ENCODE measurements at regions of chr1 and their contacts with region 1.

Region 1: DNA sequence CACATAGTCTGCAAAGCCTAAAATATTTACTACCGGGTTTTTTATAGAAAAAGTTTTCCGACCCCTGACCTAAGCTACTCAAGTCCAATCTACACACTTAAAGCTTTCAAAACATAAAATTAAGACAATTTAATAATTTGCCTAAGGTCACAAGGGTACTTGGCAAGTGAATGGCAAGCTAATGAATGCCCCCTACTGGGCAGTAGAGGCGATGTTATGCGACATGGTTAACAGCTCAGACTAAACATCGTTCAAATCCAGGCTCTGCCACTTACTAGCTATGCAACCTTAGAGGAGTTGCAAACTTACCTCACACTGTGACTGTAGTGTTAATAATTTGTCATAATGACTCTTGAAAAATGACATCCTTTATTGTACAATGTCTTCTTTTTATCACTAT is 317.2 kb upstream of the NFIA start:
- H3K4me3 Mint-ChIP-seq: no peak overlapping the region
- H3K27ac Mint-ChIP-seq: no peak overlapping the region
- H3K4me1 Mint-ChIP-seq: no peaks in the 10 kb centered on the region
- H3K27me3 Mint-ChIP-seq: no peaks in the 10 kb centered on the region

Region 2: DNA sequence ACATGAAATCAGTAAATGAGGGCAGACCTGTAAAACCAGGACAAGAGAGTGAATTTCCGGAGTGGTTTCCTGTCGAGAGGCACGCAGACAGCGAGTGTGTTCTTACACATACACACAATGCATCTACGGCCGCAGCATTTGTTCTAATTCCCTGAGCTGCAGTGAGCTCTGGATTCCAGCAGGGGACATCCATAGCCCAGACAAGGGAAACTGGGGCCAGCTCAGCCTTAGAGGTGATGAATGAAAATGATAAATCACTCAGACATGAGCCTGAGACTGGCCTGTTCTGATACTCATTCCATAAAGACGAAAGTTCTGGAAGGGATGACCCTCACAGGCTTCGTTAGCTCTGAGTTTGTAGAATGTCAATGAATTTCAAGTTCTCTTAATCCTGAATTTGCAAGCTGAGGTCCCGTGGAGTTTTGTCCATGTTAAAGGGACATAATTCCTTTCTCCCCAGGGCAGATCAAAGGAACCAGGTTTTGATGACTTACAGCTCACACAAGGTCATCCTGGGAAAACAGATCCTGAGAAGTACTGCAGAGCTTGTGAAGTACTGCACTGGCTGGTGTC is 483.8 kb before region 1 on chr1:
- intact Hi-C with region 1: loop called (anchors 5 kb)
- H3K4me3 Mint-ChIP-seq: no peak overlapping the region
- H3K27ac Mint-ChIP-seq: no peak overlapping the region
- H3K4me1 Mint-ChIP-seq: no peaks in the 10 kb centered on the region
- H3K27me3 Mint-ChIP-seq: no peaks in the 10 kb centered on the region

Region 3: DNA sequence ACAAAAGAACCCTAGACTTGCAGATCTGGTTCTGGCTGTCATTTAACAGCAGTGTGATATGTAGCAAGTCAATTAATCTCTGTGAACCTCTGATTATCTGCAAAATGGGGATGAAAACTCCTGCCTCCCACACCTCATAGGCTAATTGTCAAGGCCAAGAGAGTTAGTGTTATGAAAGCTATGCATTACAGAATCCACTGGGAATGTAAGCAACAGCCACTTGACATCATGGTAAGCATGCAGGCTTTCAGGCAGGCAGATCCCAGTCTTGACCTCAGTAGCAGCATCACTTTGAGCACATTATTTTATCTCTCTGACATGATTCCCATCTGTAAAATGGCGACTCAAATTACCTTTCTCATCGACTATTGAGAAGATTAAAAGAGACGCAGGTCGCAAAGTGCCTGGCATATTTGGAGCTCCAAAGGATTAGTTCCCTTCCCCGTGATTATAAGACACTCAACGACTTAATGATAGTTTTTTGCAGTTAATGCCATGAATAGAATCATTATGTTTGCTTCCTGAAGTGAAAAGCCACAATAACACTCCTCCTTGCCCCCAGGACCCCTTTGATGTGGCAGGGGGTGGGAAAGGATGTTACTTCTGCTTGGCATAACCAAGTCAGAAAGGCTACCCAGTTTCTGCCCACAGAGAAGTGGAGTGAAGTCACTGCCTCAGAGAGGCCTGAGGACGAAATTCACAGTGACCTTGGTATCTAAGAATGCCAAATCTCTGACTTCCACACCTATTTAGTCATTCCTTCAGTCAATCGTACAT is 44.2 kb after region 1 on chr1:
- intact Hi-C with region 1: no loop called
- H3K4me3 Mint-ChIP-seq: no peak overlapping the region
- H3K27ac Mint-ChIP-seq: no peak overlapping the region
- H3K4me1 Mint-ChIP-seq: no peaks in the 10 kb centered on the region
- H3K27me3 Mint-ChIP-seq: no peaks in the 10 kb centered on the region

Region 4: GRCh38 chr1:60825593-60825992 is 60.4 kb after region 1 on chr1:
- intact Hi-C with region 1: no loop called
- H3K4me3 Mint-ChIP-seq: no peak overlapping the region
- H3K27ac Mint-ChIP-seq: no peak overlapping the region
- H3K4me1 Mint-ChIP-seq: no peaks in the 10 kb centered on the region
- H3K27me3 Mint-ChIP-seq: no peaks in the 10 kb centered on the region